Posterior vena cava (tissue), 2 donors: ENCODE measurements at regions of chr18 and their contacts with region 1.

Region 1: DNA sequence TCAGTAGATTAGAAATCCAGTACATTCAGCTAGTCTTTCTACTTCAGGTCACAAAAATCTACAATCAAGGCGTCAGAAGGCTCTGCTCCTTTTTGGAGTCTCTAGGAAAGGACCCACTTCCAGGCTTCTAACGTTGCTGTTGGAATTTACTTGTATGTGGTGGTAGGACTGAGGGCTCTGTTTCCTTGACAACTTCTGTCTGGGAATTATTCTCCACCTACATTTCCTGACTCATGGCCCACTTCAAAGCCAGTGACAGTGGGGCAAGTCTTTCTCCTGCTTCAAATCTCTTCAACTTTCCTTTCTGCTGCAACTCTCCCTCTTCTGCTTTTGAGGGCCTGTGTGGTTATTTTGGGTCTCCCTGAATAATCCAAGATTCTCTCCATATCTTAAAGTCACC is 10.4 kb upstream of the TMX3 start:
- DNase-seq: no peak

Region 2: DNA sequence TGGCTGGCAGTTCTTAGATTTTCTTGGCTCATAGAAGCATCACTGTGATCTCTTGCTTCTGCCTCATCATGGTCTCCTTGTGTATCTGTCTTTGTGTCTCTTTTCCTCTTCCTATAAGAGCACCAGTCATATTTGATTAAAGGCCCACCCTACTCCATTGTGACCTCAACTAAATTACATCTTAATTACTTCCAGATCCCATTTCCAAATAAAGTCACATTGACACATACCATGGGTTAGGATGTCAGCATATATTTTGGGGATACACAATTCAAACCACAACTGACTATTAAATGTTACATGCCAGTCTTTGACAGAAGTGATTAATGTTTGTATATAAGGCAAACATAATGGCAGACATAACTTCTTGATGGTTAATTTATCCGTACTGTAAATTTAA is 16.9 kb after region 1 on chr18:
- intact Hi-C with region 1: loop called in 1 of 2 experiments (anchors 1 kb)
- DNase-seq: no peak